Natural killer cell (primary cell): ENCODE measurements at regions of chr19 and their contacts with region 1.

Region 1: DNA sequence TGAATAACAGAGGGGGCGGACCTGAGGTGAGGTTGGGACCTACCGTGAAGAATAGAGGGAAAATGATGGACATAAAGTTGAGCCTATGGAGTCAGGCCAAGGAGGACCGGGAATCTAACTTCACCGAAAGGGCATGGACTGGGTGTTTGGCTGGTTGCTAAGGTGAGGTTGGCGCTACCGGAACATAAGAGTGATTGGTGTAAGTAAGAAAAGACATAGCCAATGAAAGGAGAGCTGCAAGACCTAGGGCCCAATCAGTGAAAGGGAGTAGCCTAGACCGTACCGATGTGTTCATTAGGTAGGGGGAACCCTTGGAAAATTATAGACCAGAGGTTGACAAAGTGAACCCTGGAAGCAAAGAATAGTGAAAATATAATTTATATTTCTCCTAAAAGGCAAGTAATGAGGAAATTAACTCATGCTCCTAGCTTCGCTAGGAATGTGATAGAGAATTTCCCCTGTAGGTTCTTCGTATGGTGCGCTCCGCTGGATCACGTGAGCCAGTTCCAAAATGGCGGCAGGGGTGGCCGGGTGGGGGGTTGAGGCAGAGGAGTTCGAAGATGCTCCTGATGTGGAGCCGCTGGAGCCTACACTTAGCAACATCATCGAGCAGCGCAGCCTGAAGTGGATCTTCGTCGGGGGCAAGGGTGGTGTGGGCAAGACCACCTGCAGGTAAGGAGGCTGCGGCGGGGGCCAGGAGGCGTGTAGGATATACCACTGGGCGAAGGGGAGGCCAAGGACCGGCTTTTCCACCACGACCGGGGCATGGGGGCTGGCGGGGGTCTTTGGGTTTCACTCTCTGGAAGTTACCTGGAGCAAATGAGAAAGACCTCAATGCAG is at the start of gene GET3:
- DNase-seq: peak; percentile 73 to 92
- ATAC-seq: peak; percentile 72 to 85 (median 76)
- H3K4me3 ChIP-seq: peak within 1 kb of the TSS; percentile 58
- H3K4me3 Mint-ChIP-seq: peak within 1 kb of the TSS; percentile 93
- H3K27ac ChIP-seq: peak within 1 kb of the TSS; percentile 83
- H3K27ac Mint-ChIP-seq: peak within 1 kb of the TSS; percentile 90 to 92
- H3K4me1 ChIP-seq: peaks cover 43% of the 10 kb centered on the region
- H3K4me1 Mint-ChIP-seq: peaks cover 34 to 45% of the 10 kb centered on the region in 2 donors
- H3K27me3 ChIP-seq: no peaks in the 10 kb centered on the region
- H3K27me3 Mint-ChIP-seq: no peaks in the 10 kb centered on the region
- CTCF ChIP-seq: no peak
- total RNA-seq, gene GET3: 42.2 to 51.3 (median 44.2) TPM

Region 2: GRCh38 chr19:12544401-12544876 is 192.8 kb before region 1 on chr19:
- intact Hi-C with region 1: no loop called
- DNase-seq: no peak
- ATAC-seq: peak in 2 of 3 donors; percentile 34 to 47
- H3K4me3 ChIP-seq: no peak overlapping the region
- H3K4me3 Mint-ChIP-seq: peak overlapping the region; percentile 74
- H3K27ac ChIP-seq: no peak overlapping the region
- H3K27ac Mint-ChIP-seq: peak overlapping the region; percentile 86 to 90
- H3K4me1 ChIP-seq: peaks cover 15% of the 10 kb centered on the region
- H3K4me1 Mint-ChIP-seq: peaks cover 54 to 57% of the 10 kb centered on the region in 2 donors
- H3K27me3 ChIP-seq: no peaks in the 10 kb centered on the region
- H3K27me3 Mint-ChIP-seq: no peaks in the 10 kb centered on the region
- CTCF ChIP-seq: no peak

Region 3: GRCh38 chr19:12623361-12624022 is 113.7 kb before region 1 on chr19:
- intact Hi-C with region 1: no loop called
- DNase-seq: no peak
- ATAC-seq: no peak
- H3K4me3 ChIP-seq: no peak overlapping the region
- H3K4me3 Mint-ChIP-seq: no peak overlapping the region
- H3K27ac ChIP-seq: no peak overlapping the region
- H3K27ac Mint-ChIP-seq: peak overlapping the region in 1 of 2 donors; percentile 24
- H3K4me1 ChIP-seq: no peaks in the 10 kb centered on the region
- H3K4me1 Mint-ChIP-seq: peaks cover 5 to 10% of the 10 kb centered on the region in 2 donors
- H3K27me3 ChIP-seq: no peaks in the 10 kb centered on the region
- H3K27me3 Mint-ChIP-seq: no peaks in the 10 kb centered on the region
- CTCF ChIP-seq: no peak

Region 4: DNA sequence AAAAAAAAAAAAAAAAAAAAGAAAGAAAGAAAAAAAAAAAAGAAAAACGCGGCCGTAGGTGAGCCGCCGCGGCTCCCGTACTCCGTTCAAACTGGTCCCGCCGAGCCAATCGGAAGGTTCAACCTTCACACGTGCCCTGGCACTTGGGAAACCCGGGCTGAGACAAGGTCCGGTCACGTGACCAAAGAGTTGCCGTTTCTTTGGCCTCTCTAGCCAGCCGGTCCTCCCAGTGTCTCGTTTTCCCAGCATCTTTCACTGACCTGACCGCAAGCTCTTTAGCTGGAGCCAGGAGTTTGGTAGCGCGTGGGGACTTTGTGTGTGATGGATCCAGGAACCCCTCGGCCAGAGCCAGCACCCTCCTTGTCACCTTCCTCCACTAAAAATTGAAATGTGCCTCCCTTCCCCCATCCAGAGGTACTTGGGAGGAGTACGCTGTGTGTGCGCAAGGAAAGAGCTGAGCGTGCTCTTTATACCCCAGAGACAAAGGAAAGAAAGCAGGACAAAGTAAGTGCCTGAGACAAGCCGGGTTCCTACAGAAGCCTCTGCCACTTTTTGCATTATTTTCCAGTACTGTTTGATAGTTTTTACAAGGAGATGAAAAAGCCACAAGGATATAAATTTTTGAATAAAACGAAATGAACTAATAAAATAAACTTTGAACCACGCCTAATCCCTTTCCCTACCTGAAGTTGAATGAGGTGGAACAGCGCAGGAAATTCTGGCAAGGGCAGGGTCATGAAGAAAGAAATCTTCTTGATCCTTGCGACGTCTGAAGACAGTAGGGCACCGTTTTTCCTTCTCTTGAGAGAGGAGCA is 14.4 kb before region 1 on chr19:
- intact Hi-C with region 1: loop called (anchors 1 kb)
- DNase-seq: peak; percentile 87 to 99
- ATAC-seq: peak; percentile 87 to 97 (median 95)
- H3K4me3 ChIP-seq: peak overlapping the region; percentile 60
- H3K4me3 Mint-ChIP-seq: peak overlapping the region; percentile 93
- H3K27ac ChIP-seq: peak overlapping the region; percentile 44
- H3K27ac Mint-ChIP-seq: peak overlapping the region; percentile 91 to 96
- H3K4me1 ChIP-seq: peaks cover 36% of the 10 kb centered on the region
- H3K4me1 Mint-ChIP-seq: peaks cover 26 to 42% of the 10 kb centered on the region in 2 donors
- H3K27me3 ChIP-seq: no peaks in the 10 kb centered on the region
- H3K27me3 Mint-ChIP-seq: no peaks in the 10 kb centered on the region
- CTCF ChIP-seq: no peak